Heart left ventricle (tissue), 16 donors: ENCODE measurements at regions of chr5 and their contacts with region 1.

Region 1: DNA sequence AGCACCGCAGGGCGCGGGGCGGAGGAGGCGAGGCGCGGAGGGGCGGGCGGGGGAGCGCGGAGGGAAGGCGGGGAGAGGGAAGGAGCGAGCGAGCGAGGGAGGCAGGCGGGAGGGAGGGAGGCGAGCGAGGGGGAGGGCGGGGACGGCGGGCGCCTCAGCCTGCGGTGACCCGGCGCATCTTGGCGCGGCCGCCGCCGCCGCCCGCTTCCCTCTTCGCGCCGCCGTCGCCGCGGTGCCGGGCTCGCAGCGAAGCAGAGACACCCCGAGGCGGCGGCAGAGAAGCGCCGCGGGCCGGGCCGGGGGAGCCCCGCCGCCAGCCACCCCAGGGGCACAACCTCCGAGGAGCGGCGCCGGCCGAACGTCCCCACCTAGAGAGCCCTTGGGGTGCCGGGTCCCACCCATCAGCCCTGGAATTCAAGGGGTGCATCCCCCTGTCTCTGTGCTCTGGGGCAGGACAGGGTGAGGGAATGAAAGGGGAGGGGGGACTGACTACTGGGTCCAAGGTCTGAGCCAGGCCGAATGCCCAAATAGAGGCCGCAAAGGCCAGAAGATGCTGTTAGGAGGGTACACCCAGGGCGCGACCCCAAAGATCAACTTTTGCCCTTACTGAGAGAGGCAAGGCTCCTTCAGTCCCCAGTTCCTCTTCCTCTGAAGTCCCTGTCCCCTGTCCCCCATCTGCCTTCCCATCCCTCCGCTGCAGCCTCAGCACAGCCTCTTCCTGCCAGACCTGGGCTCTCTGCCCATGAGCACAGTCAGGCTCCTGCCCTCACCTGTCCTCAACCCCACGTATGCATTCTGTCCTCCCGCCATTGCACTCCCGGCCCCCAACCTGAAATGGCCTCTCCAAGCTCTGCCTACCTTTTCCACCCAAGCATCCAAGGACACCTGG is at the start of gene ADAMTS2:
- DNase-seq: peak; percentile 54 to 84 (median 68)
- ATAC-seq: peak in 3 of 4 donors; percentile 36 to 74 (median 69)
- H3K4me3 ChIP-seq: peak within 1 kb of the TSS; percentile 44 to 71 (median 56)
- H3K27ac ChIP-seq: peak within 1 kb of the TSS in 8 of 12 donors; percentile 23 to 61 (median 46)
- H3K4me1 ChIP-seq: peaks cover 0 to 35% (median 16%) of the 10 kb centered on the region in 12 donors
- H3K27me3 ChIP-seq: peaks cover 16 to 56% (median 34%) of the 10 kb centered on the region in 9 donors
- CTCF ChIP-seq: peak in 1 of 12 donors; percentile 16
- POLR2A ChIP-seq: no peak
- total RNA-seq, gene ADAMTS2: 1.1 to 23.0 (median 5.5) TPM

Region 2: DNA sequence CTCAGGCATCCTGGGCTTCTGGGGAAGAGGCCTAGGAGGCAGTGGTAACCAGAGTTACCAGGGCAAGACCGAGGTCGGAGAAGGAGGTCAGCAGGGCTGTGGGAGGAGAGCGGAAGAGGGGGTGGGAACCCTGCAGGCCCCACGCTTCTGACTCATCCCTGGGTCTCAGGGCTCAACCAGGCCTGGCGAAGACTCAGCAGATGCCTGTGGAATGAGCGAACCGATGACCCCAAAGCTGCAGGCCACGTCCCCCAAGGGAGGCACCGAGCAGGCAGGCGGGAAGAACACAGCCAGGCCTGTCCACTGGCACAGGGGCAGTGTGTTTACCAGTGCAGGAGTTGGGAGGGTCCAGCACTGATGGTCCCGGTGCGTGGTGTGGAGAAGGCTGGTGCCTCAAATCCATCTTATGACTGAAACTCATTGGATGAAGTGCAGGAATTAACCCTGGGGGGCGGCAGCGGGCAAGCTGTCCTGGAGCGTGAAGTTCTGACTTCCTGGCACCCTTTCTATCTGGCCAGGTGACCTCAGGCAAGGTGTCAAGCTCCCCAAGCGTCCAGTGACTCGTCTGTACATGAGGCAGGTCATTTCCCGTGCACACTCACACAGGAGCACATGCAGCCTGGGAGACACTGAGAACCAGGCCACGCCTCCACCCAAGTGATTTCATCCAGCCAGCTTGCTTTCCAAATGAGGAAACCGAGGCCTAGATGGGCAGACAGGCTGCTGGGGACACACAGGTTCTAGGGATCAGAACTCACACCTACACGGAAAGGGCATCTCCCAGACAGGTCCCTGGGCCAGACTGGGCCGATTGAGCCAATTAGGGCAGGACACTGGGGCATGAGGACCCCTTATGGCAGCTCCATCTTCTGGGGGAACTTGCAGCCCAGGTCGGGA is 69.5 kb before region 1 on chr5:
- intact Hi-C with region 1: loop called in 1 of 10 experiments (anchors 10 kb)
- DNase-seq: peak; percentile 50 to 89 (median 81)
- ATAC-seq: peak in 3 of 4 donors; percentile 72 to 89 (median 77)
- H3K4me3 ChIP-seq: no peak overlapping the region
- H3K27ac ChIP-seq: peak overlapping the region in 9 of 12 donors; percentile 3 to 78 (median 52)
- H3K4me1 ChIP-seq: peaks cover 0 to 39% (median 6%) of the 10 kb centered on the region in 12 donors
- H3K27me3 ChIP-seq: no peaks in the 10 kb centered on the region
- CTCF ChIP-seq: no peak
- POLR2A ChIP-seq: no peak

Region 3: GRCh38 chr5:179313849-179314521 is 31.7 kb before region 1 on chr5:
- intact Hi-C with region 1: no loop called
- DNase-seq: peak; percentile 75 to 91 (median 88)
- ATAC-seq: peak; percentile 91 to 95 (median 94)
- H3K4me3 ChIP-seq: peak overlapping the region in 2 of 12 donors; percentile 8 to 10
- H3K27ac ChIP-seq: peak overlapping the region in 9 of 12 donors; percentile 34 to 66 (median 44)
- H3K4me1 ChIP-seq: peaks cover 0 to 31% (median 7%) of the 10 kb centered on the region in 12 donors
- H3K27me3 ChIP-seq: no peaks in the 10 kb centered on the region
- CTCF ChIP-seq: no peak
- POLR2A ChIP-seq: no peak

Region 4: GRCh38 chr5:179495906-179496455 is 150.3 kb after region 1 on chr5:
- intact Hi-C with region 1: loop called in 1 of 10 experiments (anchors 10 kb)
- DNase-seq: no peak
- ATAC-seq: no peak
- H3K4me3 ChIP-seq: no peak overlapping the region
- H3K27ac ChIP-seq: no peak overlapping the region
- H3K4me1 ChIP-seq: no peaks in the 10 kb centered on the region
- H3K27me3 ChIP-seq: peaks cover 0 to 11% (median 0%) of the 10 kb centered on the region in 9 donors
- CTCF ChIP-seq: no peak
- POLR2A ChIP-seq: no peak